ENCODE measurements at regions of chr6 and their contacts with region 1.

Region 1: GRCh38 chr6:149431905-149432775 is 32.1 kb downstream of the SUMO4 start:
- DNase-seq: peak; percentile 82
- H3K4me3 ChIP-seq: peak overlapping the region; percentile 56
- H3K27ac ChIP-seq: peak overlapping the region; percentile 59
- H3K4me1 ChIP-seq: 0 out of 2 replicates have a peak, but pooled peaks cover 10% of the 10 kb centered on the region
- H3K27me3 ChIP-seq: no peaks in the 10 kb centered on the region

Region 2: GRCh38 chr6:148578245-148578732 is 853.9 kb before region 1 on chr6:
- in situ Hi-C with region 1: loop called (anchors 25 kb)
- DNase-seq: peak; percentile 93
- H3K4me3 ChIP-seq: no peak overlapping the region
- H3K27ac ChIP-seq: no peak overlapping the region
- H3K4me1 ChIP-seq: peaks cover 3% of the 10 kb centered on the region; the same call in 1 of the 2 replicates
- H3K27me3 ChIP-seq: no peaks in the 10 kb centered on the region

Region 3: GRCh38 chr6:149032599-149033405 is 399.3 kb before region 1 on chr6:
- in situ Hi-C with region 1: loop called (anchors 5 kb)
- DNase-seq: peak; percentile 93
- H3K4me3 ChIP-seq: peak overlapping the region; percentile 48
- H3K27ac ChIP-seq: peak overlapping the region; percentile 96
- H3K4me1 ChIP-seq: peaks cover 43% of the 10 kb centered on the region
- H3K27me3 ChIP-seq: no peaks in the 10 kb centered on the region

Region 4: GRCh38 chr6:149094156-149094555 is 338.0 kb before region 1 on chr6:
- in situ Hi-C with region 1: loop called (anchors 5 kb)
- DNase-seq: peak; percentile 27
- H3K4me3 ChIP-seq: no peak overlapping the region
- H3K27ac ChIP-seq: no peak overlapping the region
- H3K4me1 ChIP-seq: peaks cover 23% of the 10 kb centered on the region
- H3K27me3 ChIP-seq: no peaks in the 10 kb centered on the region

Measured in GM23248 (cell line).